ENCODE measurements at regions of chr19 and their contacts with region 1.

Region 1: DNA sequence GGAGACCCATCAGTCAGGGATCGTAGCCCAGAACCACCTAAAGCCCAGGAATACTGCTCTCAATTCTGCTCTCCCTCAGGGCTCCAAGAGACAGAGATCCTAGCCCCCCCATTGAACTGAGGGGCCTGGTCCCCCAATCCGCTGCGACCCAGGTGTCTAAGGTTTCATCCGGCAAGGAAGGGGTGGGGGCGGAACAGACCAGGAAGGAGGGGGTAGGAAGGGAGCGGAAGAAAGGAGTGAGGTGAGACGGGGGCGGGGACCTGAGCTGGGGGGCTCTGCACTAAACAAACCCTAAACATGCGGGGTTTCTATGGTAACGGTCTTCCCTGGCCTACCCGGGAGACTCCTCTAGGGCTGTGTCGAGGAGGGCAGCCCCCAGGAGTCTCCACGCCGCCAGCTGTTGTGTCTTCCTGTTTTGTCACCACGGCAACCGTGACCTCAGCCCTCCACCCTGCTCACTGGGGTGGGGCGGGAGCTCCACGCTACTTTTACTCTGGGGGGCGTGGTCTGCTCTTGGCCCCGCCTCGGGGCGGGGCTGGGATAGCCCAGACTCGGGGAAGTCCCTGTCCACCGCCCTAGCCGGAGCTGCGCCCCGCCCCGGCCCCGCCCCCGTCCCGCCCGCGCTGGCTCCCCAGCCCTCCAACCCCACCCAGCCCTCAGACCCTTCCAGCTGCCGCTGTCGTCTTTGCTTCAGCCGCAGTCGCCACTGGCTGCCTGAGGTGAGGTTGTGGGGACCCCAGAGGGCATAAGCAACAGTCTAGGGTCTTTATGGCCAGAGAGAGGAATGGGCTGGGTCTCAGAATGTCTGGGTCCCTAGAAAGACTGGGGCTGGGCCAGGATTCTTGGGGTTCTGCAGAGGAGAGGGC is at the start of gene MYADM:
- DNase-seq: peak; percentile 99
- H3K4me3 Mint-ChIP-seq: peak within 1 kb of the TSS; percentile 88
- H3K27ac Mint-ChIP-seq: peak within 1 kb of the TSS; percentile 82
- H3K4me1 Mint-ChIP-seq: peaks cover 36% of the 10 kb centered on the region
- H3K27me3 Mint-ChIP-seq: no peaks in the 10 kb centered on the region
- total RNA-seq, gene MYADM: 13.6 to 13.9 TPM

Region 2: GRCh38 chr19:53431399-53432087 is 435.9 kb before region 1 on chr19 and contains the start of gene ZNF761:
- CTCF ChIA-PET with region 1: no interaction called
- intact Hi-C with region 1: loop called (anchors 1 kb)
- DNase-seq: peak; percentile 97
- H3K4me3 Mint-ChIP-seq: peak within 1 kb of the TSS; percentile 83
- H3K27ac Mint-ChIP-seq: peak within 1 kb of the TSS; percentile 88
- H3K4me1 Mint-ChIP-seq: peaks cover 21% of the 10 kb centered on the region
- H3K27me3 Mint-ChIP-seq: no peaks in the 10 kb centered on the region
- total RNA-seq, gene ZNF761: 8.7 to 10.0 TPM

Region 3: DNA sequence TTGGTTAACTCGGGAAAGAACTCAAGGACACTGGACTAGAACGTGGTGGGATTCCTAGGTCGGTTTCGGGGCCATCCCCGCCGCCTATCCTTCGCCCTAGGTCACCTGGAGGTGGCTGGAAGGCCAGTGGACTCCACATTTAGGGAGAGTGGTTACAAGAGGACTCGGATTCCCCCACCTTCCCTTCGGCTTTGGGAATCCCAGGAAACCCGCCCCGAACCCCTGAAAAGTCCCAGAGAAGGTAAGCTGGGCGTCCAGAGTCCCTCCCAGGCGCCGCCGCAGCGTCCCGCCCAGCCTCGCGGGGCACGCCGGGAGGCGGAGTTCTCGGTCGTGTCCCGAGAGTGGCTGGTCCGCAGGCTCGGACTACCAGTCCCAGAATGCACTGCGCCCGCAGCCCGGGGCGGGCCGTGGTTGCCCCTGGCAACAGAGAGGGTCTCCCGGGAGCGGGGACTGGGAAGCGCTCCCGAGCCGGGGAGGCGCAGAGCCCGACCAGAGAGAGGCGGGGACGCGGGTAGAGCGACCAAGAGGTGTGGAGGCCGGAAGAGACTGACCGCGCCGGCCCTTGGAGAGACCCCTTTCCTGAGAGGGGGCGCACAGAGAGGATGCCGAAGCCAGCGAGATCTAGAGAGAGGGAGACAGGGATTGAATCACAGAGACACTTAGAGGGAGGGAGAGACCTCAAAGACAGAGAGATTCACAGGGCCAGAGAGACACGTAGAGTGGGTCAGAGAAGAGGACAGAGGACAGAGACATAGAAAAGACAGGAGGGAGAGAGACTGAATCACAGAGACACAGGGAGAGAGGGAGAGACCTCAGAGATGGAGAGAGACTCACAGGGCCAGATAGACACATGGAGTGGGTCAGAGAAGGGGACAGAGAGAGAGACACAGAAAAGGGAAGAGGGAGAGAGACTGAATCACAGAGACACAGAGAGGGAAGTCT is 12.0 kb after region 1 on chr19:
- CTCF ChIA-PET with region 1: interaction called, 10 read pairs
- intact Hi-C with region 1: loop called (anchors 1 kb)
- DNase-seq: peak; percentile 85
- H3K4me3 Mint-ChIP-seq: no peak overlapping the region
- H3K27ac Mint-ChIP-seq: peak overlapping the region; percentile 14
- H3K4me1 Mint-ChIP-seq: peaks cover 47% of the 10 kb centered on the region
- H3K27me3 Mint-ChIP-seq: peaks cover 12% of the 10 kb centered on the region

Region 4: DNA sequence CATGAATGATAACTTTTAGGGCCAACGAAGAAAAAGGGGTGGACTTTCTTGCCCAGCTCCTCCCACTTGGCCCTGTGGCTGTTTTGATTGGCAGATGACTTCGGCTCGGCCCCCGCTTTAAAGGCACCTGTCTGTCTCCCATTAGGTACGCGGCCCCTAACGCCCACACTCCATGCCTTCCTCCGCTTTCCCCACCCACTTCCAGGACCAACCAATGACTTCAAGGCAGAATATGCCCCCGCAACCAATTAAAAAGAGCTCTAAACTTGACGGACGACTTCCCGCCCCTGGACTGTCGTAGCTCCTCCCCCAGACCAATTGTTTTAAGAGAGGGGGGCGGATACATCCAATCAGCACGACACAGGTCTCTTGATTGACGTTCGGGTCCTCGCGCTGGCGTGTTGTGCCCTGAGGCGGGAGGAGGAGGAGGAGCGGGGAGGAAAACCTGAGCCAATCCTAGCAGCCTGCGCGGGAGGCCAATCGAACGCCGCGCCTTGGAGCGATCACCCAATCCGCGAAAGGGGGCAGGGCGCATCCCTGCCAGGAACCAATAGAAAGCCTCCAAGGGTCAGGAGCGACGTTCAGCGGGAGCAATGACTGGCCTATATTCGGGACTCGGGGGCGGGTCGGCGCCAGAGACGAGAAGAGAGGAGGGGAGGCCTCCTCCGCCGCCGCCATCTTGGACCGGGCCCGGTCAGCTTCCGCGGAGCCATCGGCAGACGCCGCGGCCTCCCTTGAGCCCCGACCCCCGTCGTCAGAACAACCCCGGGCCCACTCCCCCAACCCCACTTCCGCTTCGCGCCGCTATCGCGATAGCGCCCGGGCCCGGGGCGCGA is 269.8 kb after region 1 on chr19 and contains the start of gene CNOT3:
- CTCF ChIA-PET with region 1: no interaction called
- intact Hi-C with region 1: loop called (anchors 1 kb)
- DNase-seq: peak; percentile 100
- H3K4me3 Mint-ChIP-seq: peak within 1 kb of the TSS; percentile 83
- H3K27ac Mint-ChIP-seq: peak within 1 kb of the TSS; percentile 89
- H3K4me1 Mint-ChIP-seq: peaks cover 39% of the 10 kb centered on the region
- H3K27me3 Mint-ChIP-seq: no peaks in the 10 kb centered on the region
- total RNA-seq, gene CNOT3: 50.4 to 58.3 TPM

Region 5: DNA sequence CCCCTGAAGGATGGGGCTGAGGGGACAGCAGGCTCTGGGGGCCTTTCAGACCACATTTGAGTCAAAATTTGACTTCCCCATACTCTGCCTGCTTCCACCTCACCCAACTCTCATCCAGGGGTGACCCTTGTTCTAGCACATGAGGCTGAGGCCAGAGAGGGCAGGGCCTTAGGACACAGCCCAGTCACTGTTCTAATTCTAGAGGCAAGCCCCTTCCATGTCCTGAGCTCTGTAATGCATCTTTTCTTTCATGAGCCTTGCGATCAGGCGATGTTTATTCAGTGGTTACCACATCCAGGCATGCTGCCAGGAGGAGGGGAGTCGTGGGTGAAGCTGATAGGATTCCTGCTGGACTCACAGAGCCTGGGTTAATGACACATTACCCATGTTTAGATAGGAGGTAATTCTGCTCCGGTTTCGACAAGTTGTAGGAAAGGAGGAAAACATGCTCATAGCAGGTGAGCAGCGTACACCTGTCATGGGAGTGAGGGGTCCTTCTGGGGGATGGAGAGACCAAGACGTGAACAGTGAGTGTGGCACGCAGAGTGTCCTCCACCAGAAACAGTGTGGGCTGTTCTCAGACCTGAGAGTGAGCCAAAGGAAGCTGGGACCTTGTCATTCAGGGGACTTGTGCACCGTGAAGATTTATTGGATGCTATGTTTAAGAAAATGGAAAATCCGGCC is 342.5 kb after region 1 on chr19:
- CTCF ChIA-PET with region 1: interaction called, 4 read pairs
- intact Hi-C with region 1: loop called (anchors 5 kb)
- DNase-seq: no peak
- H3K4me3 Mint-ChIP-seq: no peak overlapping the region
- H3K27ac Mint-ChIP-seq: peak overlapping the region; percentile 73
- H3K4me1 Mint-ChIP-seq: peaks cover 65% of the 10 kb centered on the region
- H3K27me3 Mint-ChIP-seq: no peaks in the 10 kb centered on the region

Region 6: GRCh38 chr19:54456423-54457373 is 589.2 kb after region 1 on chr19:
- CTCF ChIA-PET with region 1: no interaction called
- intact Hi-C with region 1: loop called (anchors 2 kb)
- DNase-seq: no peak
- H3K4me3 Mint-ChIP-seq: no peak overlapping the region
- H3K27ac Mint-ChIP-seq: no peak overlapping the region
- H3K4me1 Mint-ChIP-seq: peaks cover 23% of the 10 kb centered on the region
- H3K27me3 Mint-ChIP-seq: no peaks in the 10 kb centered on the region